Right lobe of liver (tissue), 6 donors: ENCODE measurements at regions of chr9 and their contacts with region 1.

Region 1: DNA sequence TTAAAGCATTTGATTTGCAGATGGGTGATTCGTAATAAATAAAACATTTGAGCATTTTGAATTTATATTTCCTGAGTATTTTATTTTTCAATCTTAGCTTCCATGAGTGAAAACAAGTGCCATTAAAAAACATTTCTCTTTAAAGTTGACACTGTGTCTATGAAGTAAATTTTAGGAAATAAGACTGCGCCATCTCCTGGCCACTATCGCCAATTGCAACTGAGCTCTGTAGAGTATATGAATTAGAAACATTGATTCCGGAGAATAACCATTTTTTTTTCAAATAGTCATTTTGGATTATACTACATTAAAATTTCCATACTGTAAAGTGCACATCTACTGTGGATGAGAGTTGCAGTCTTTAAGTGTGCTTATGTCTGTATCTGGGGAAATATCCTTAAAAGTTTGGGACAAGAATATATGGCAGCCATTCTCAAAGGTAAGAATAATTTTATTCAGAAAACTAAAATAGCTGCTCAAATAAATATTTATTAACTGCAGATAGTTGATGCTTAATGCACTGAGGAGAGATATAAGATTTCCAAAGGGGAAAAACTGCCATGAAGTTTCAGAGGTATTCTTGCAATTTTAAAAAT is 5.9 kb downstream of the DMRTA1 start:
- DNase-seq: peak; percentile 35 to 54 (median 48)
- ATAC-seq: peak; percentile 44 to 62 (median 50)
- H3K4me3 ChIP-seq: no peak overlapping the region
- H3K27ac ChIP-seq: no peak overlapping the region
- H3K4me1 ChIP-seq: peaks cover 0 to 40% (median 10%) of the 10 kb centered on the region in 4 donors
- H3K27me3 ChIP-seq: no peaks in the 10 kb centered on the region
- CTCF ChIP-seq: peak; percentile 83 to 93 (median 88)
- POLR2A ChIP-seq: no peak

Region 2: GRCh38 chr9:22307013-22307711 is 145.4 kb before region 1 on chr9:
- intact Hi-C with region 1: loop called (anchors 5 to 10 kb)
- DNase-seq: peak in 1 of 3 donors; percentile 60
- ATAC-seq: peak; percentile 84 to 93 (median 90)
- H3K4me3 ChIP-seq: no peak overlapping the region
- H3K27ac ChIP-seq: peak overlapping the region in 1 of 3 donors; percentile 1
- H3K4me1 ChIP-seq: peaks cover 0 to 19% (median 7%) of the 10 kb centered on the region in 4 donors
- H3K27me3 ChIP-seq: no peaks in the 10 kb centered on the region
- CTCF ChIP-seq: peak; percentile 71 to 80 (median 74)
- POLR2A ChIP-seq: no peak

Region 3: GRCh38 chr9:22363421-22363887 is 89.1 kb before region 1 on chr9:
- intact Hi-C with region 1: no loop called
- DNase-seq: peak in 1 of 3 donors; percentile 51
- ATAC-seq: peak in 1 of 4 donors; percentile 13
- H3K4me3 ChIP-seq: no peak overlapping the region
- H3K27ac ChIP-seq: no peak overlapping the region
- H3K4me1 ChIP-seq: no peaks in the 10 kb centered on the region
- H3K27me3 ChIP-seq: no peaks in the 10 kb centered on the region
- CTCF ChIP-seq: no peak
- POLR2A ChIP-seq: no peak